AG04450 (cell line): ENCODE measurements at regions of chr9 and their contacts with region 1.

Region 1: GRCh38 chr9:16884952-16885513 is 14.6 kb upstream of the BNC2 start:
- DNase-seq: peak; percentile 98
- H3K4me3 ChIP-seq: no peak overlapping the region
- H3K27ac ChIP-seq: peak overlapping the region; percentile 77
- H3K27me3 ChIP-seq: no peaks in the 10 kb centered on the region
- CTCF ChIP-seq: no peak

Region 2: DNA sequence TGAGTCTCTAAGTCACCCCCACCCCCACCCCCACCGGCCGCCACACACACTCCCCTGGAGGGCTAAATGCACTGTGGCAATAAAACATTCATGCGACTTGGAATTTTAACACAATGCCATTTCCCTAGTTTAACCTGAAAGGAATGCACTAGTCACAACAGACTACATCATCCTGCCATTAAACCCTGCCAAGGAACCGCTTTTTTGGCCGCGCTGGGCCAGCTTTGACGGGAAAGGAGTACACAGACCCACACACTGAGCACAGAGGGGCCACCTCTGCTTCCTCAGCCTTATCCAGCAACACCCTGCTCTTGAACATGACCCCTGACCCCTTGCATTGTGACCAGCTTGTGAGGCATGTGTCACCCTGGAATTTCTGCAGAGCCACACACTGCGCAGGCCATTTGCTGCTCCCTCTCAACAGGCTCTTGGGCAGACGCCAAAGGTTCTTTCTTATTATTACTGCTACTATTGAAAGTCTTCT is 179.9 kb before region 1 on chr9:
- CTCF ChIA-PET with region 1: no interaction called
- POLR2A ChIA-PET with region 1: interaction called, 11 read pairs
- DNase-seq: peak; percentile 83
- H3K4me3 ChIP-seq: peak overlapping the region; percentile 50
- H3K27ac ChIP-seq: peak overlapping the region; percentile 98
- H3K27me3 ChIP-seq: no peaks in the 10 kb centered on the region
- CTCF ChIP-seq: no peak

Region 3: DNA sequence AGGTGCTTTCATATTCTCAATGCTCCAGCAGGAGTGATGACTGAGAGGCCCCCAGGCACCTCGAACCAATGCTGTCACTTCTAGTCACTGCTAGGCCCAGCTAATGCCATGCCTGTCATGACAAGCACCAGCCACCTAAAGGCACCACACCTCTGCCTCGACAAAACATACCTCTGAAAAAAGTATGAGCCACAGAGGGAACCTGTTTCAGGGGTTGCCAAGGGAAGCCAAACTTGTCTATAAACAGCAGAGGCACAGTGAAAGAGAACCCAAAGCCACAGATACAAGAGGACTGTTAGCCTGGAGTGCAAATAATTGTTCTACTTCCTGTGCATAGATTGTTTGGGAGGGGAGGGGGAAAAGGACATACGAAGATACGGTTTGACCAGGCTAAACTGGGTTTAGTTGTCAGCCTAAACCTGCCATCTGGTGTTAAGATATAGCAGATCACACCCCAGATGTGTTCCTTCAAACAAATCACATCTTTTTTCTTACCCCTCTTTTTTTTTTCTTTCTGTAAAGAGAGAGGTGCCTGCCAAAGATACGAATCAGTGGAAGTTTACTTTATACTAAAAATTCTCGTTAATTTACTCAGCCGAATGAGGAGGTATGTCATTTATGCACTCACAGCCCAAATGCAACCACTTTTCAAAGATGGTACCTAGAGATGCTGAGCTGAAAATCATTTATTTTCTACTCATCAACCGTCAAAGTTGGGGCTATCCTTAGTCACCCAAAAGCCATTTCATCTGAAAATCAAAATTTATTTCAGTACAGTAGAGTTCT is 60.3 kb before region 1 on chr9:
- CTCF ChIA-PET with region 1: no interaction called
- POLR2A ChIA-PET with region 1: interaction called, 12 read pairs
- DNase-seq: peak; percentile 70
- H3K4me3 ChIP-seq: peak overlapping the region; percentile 15; the same call in 1 of the 2 replicates
- H3K27ac ChIP-seq: peak overlapping the region; percentile 92
- H3K27me3 ChIP-seq: no peaks in the 10 kb centered on the region
- CTCF ChIP-seq: peak; percentile 5; the same call in 1 of the 2 replicates

Region 4: GRCh38 chr9:16871356-16872151 is 13.5 kb before region 1 on chr9:
- CTCF ChIA-PET with region 1: no interaction called
- POLR2A ChIA-PET with region 1: interaction called, 27 read pairs
- DNase-seq: no peak
- H3K4me3 ChIP-seq: peak overlapping the region; percentile 80
- H3K27ac ChIP-seq: peak overlapping the region; percentile 92
- H3K27me3 ChIP-seq: no peaks in the 10 kb centered on the region
- CTCF ChIP-seq: no peak

Region 5: DNA sequence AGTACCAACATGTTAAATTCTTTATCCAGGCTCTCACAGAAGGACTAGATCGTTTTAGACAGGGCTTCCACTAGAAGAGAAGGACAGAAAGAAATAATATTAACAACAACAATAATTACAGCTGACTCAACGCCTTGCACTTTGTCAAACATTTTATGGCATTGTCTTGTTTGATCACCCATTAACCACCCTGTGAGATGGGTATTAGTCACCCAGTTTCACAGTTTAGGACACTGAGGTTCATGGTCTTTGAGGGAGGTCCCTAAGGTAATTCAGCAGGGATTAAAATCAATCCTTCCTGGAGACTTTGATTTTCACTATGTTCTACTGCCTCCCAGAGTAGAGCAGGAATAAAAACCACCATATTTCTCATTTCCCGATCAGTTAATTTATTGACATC is 36.8 kb after region 1 on chr9:
- CTCF ChIA-PET with region 1: no interaction called
- POLR2A ChIA-PET with region 1: no interaction called
- DNase-seq: no peak
- H3K4me3 ChIP-seq: no peak overlapping the region
- H3K27ac ChIP-seq: no peak overlapping the region
- H3K27me3 ChIP-seq: no peaks in the 10 kb centered on the region
- CTCF ChIP-seq: no peak

Region 6: DNA sequence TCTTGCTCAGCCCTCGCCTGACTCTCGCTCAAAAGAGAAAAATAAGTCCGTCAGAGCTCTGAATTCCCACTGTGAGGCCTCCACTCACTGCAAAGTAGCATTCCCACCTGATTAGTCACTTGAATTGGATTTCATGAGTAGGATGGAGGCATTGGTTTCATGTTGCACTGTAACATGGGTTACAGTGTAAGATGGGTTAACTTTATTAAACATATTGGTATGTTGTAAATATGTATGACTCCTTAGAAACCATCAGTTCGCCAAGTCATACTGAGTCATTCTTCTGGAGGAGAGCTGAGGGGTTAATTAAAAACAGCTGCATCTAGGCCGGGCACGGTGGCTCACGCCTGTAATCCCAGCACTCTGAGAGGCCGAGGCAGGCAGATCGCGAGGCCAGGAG is 79.2 kb after region 1 on chr9:
- CTCF ChIA-PET with region 1: no interaction called
- POLR2A ChIA-PET with region 1: interaction called, 11 read pairs
- DNase-seq: peak; percentile 98
- H3K4me3 ChIP-seq: no peak overlapping the region
- H3K27ac ChIP-seq: peak overlapping the region; percentile 100
- H3K27me3 ChIP-seq: no peaks in the 10 kb centered on the region
- CTCF ChIP-seq: no peak

Region 7: DNA sequence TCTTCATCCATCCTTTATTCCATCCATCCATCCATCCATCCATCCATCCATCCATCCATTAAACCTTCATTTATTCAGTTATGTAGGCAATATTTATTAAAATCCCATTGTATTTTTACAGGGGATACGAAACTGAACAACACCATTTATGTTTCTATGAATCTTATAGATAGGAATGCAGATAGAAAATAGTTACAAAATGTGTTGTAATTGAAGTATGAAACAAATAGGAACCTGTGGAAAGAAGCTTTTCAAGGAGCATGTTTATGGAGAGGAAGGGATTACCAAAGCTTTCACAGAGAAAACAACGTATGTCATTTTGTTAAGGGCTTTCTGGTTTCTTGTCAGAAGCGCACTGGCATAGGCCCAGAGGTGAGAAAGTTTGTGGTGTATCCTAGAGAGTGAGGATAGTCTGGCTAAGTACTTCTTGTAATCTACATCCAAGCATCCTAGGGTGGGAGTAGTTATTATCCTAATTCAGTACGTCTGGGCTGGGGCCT is 433.8 kb after region 1 on chr9:
- CTCF ChIA-PET with region 1: no interaction called
- POLR2A ChIA-PET with region 1: no interaction called
- DNase-seq: no peak
- H3K4me3 ChIP-seq: no peak overlapping the region
- H3K27ac ChIP-seq: no peak overlapping the region
- H3K27me3 ChIP-seq: no peaks in the 10 kb centered on the region
- CTCF ChIP-seq: no peak